Activated B cell treated with CpG ODN at 0.5 μM for 24 hours (primary cell): ENCODE measurements at regions of chr2 and their contacts with region 1.

Region 1: DNA sequence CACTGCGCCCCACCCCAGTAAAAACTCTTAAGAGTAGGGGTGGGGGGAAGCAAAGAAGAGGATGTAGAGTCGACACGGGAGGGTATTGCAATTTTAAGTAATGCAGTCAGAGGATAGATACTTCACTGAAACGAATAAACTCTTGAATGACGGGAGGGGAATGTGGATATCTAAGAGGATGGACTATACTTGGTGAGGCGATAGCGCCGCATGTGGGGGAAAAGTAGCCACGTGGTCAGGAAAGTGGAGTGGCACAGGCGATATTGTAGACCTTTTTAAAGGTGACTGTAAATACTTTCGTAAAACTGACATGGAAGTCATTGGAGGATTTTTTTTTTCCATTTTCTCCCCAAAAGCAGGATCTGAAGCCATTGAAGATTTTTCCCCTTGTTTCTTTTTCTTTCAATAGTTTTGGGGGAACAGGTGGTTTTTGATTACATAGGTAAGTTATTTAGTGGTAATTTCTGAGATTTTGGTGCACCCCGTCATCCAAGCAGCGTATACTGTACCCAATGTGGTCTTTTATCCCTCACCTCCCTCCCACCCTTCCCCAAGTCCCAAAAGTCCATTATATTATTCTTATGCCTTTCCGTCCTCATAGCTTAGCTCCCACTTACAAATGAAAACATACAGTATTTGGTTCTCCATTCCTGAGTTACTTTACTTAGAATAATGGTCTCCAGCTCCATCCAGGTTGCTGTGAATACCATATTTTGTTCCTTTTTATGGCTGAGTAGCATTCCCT is 13.8 kb downstream of the CLK1 start:
- DNase-seq: no peak
- ATAC-seq: no peak
- H3K4me3 Mint-ChIP-seq: no peak overlapping the region
- H3K27ac Mint-ChIP-seq: peak overlapping the region; percentile 21
- H3K4me1 Mint-ChIP-seq: no peaks in the 10 kb centered on the region
- H3K27me3 Mint-ChIP-seq: no peaks in the 10 kb centered on the region
- CTCF ChIP-seq: no peak

Region 2: GRCh38 chr2:200864176-200864976 is 13.7 kb after region 1 on chr2 and contains the start of gene CLK1:
- CTCF ChIA-PET with region 1: no interaction called
- POLR2A ChIA-PET with region 1: interaction called, 27 read pairs
- intact Hi-C with region 1: no loop called
- DNase-seq: peak; percentile 90
- ATAC-seq: peak; percentile 82
- H3K4me3 Mint-ChIP-seq: peak within 1 kb of the TSS; percentile 100
- H3K27ac Mint-ChIP-seq: peak within 1 kb of the TSS; percentile 100
- H3K4me1 Mint-ChIP-seq: peaks cover 41% of the 10 kb centered on the region
- H3K27me3 Mint-ChIP-seq: no peaks in the 10 kb centered on the region
- CTCF ChIP-seq: no peak
- total RNA-seq, gene CLK1: 173 and 203 TPM in 2 replicates